MCF 10A (cell line): ENCODE measurements at regions of chr18 and their contacts with region 1.

Region 1: DNA sequence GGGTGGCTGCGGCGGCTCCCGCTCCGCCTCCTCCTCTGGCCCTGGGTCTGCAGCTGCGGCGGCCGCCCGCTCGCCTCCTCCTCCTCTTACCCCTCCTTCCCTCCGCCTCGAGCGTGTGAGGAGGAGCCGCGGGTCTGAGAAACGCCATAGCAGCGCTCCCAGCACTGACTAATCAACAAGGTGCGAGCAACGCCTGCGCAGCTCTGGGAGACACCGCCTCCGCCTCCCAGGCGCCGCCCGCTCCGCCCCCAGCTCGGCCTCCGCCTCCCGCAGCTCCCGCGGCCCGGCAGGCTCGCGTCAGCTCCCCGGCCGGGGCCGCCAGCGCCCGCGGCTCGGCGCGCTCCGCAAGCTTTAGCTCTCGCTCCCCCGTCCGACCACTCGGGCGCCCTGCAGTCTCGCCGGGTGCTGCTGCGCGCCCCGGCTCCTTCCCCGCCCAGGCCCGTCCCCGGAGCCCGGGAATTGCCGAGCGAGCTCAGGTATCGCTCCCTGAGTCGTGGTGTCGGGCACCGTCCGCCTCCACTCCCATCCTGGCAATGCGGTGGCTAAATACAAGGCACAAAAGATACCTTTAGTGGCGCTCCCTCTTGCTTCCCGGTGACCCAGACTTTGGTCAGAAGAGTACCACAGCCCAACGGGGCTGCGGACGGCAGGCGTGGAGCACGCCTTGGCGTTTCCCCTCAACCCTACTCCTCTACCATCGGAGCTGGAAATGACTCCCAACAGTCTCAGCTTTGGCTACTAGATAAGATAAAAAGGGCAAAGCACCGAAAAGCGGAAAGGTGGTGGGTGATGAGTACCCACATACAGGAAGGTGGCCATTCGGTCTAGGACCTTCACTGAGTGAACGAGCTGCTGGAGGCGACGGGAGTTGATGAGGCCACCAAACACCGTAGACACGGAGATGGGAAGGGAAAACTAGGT is at the start of gene GAREM1:
- DNase-seq: peak; percentile 99
- H3K4me3 Mint-ChIP-seq: peak within 1 kb of the TSS; percentile 77
- H3K27ac Mint-ChIP-seq: peak within 1 kb of the TSS; percentile 35
- H3K4me1 Mint-ChIP-seq: peaks cover 22% of the 10 kb centered on the region
- H3K27me3 Mint-ChIP-seq: no peaks in the 10 kb centered on the region
- CTCF ChIP-seq: peak; percentile 81
- total RNA-seq, gene GAREM1: 21.4 and 24.0 TPM in 2 replicates

Region 2: DNA sequence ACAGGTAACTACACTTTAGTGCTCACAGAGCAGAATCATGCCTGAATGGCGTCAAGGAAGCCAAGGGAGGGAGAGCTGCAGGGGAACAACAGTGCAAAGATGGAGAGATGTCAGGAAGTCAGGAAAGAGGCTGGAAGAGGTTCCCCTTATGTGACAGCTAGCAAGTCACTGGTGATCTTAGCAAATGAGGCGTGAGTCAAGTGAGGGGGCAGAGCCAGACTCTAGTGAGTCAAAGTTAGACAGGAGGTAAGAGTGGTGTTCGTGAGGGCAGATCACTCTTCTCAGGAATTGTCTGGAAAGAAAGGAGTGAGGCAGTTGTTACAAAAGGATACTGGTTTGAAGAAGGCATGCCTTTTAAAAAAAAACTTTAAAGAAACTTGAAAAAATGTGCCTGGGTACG is 194.1 kb before region 1 on chr18:
- CTCF ChIA-PET with region 1: interaction called, 193 read pairs
- POLR2A ChIA-PET with region 1: interaction called, 40 read pairs
- intact Hi-C with region 1: no loop called
- DNase-seq: no peak
- H3K4me3 Mint-ChIP-seq: no peak overlapping the region
- H3K27ac Mint-ChIP-seq: no peak overlapping the region
- H3K4me1 Mint-ChIP-seq: peaks cover 18% of the 10 kb centered on the region
- H3K27me3 Mint-ChIP-seq: no peaks in the 10 kb centered on the region
- CTCF ChIP-seq: no peak

Region 3: GRCh38 chr18:32308493-32309120 is 162.4 kb before region 1 on chr18:
- CTCF ChIA-PET with region 1: interaction called, 21 read pairs
- POLR2A ChIA-PET with region 1: interaction called, 34 read pairs
- intact Hi-C with region 1: no loop called
- DNase-seq: peak; percentile 93
- H3K4me3 Mint-ChIP-seq: no peak overlapping the region
- H3K27ac Mint-ChIP-seq: peak overlapping the region; percentile 49
- H3K4me1 Mint-ChIP-seq: peaks cover 19% of the 10 kb centered on the region
- H3K27me3 Mint-ChIP-seq: no peaks in the 10 kb centered on the region
- CTCF ChIP-seq: no peak

Region 4: GRCh38 chr18:32349728-32350395 is 121.1 kb before region 1 on chr18:
- CTCF ChIA-PET with region 1: interaction called, 3 read pairs
- POLR2A ChIA-PET with region 1: interaction called, 36 read pairs
- intact Hi-C with region 1: no loop called
- DNase-seq: peak; percentile 94
- H3K4me3 Mint-ChIP-seq: peak overlapping the region; percentile 67
- H3K27ac Mint-ChIP-seq: peak overlapping the region; percentile 94
- H3K4me1 Mint-ChIP-seq: peaks cover 28% of the 10 kb centered on the region
- H3K27me3 Mint-ChIP-seq: no peaks in the 10 kb centered on the region
- CTCF ChIP-seq: no peak

Region 5: GRCh38 chr18:32405588-32405987 is 65.4 kb before region 1 on chr18:
- CTCF ChIA-PET with region 1: no interaction called
- POLR2A ChIA-PET with region 1: interaction called, 6 read pairs
- intact Hi-C with region 1: loop called (anchors 5 kb)
- DNase-seq: no peak
- H3K4me3 Mint-ChIP-seq: no peak overlapping the region
- H3K27ac Mint-ChIP-seq: no peak overlapping the region
- H3K4me1 Mint-ChIP-seq: peaks cover 13% of the 10 kb centered on the region
- H3K27me3 Mint-ChIP-seq: no peaks in the 10 kb centered on the region
- CTCF ChIP-seq: no peak

Region 6: DNA sequence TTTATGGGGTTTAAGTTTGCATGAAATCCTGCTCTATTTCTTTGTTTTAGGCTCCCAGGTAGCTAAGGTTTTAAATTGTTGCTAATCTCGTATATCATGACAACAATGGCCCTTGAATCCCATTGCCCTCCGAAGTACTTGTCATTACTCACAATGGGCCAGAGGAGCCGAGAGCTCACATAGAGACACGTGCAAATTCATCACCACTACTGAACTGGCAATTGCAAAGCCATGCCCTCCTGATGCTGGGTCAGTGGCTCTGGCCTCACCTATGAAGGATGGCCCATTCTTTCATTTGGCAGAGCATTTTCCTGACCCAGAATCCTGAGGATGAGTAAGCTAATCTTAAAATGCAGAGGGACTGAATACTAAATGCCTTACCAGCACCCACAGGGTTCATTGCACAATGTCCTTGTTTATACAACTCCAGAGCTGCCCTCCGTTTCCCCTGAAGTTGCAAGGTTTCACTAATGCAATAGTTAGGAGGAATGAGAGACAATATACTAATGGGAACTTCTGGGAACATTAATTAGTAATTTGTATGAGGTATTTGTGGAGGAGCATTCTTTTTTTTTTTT is 71.3 kb after region 1 on chr18:
- CTCF ChIA-PET with region 1: interaction called, 186 read pairs
- POLR2A ChIA-PET with region 1: interaction called, 39 read pairs
- intact Hi-C with region 1: no loop called
- DNase-seq: peak; percentile 93
- H3K4me3 Mint-ChIP-seq: peak overlapping the region; percentile 62
- H3K27ac Mint-ChIP-seq: peak overlapping the region; percentile 17
- H3K4me1 Mint-ChIP-seq: peaks cover 29% of the 10 kb centered on the region
- H3K27me3 Mint-ChIP-seq: no peaks in the 10 kb centered on the region
- CTCF ChIP-seq: no peak